Activated naive CD4-positive, alpha-beta T cell treated with anti-CD3 and anti-CD28 coated beads for 36 hours (primary cell): ENCODE measurements at regions of chr5 and their contacts with region 1.

Region 1: DNA sequence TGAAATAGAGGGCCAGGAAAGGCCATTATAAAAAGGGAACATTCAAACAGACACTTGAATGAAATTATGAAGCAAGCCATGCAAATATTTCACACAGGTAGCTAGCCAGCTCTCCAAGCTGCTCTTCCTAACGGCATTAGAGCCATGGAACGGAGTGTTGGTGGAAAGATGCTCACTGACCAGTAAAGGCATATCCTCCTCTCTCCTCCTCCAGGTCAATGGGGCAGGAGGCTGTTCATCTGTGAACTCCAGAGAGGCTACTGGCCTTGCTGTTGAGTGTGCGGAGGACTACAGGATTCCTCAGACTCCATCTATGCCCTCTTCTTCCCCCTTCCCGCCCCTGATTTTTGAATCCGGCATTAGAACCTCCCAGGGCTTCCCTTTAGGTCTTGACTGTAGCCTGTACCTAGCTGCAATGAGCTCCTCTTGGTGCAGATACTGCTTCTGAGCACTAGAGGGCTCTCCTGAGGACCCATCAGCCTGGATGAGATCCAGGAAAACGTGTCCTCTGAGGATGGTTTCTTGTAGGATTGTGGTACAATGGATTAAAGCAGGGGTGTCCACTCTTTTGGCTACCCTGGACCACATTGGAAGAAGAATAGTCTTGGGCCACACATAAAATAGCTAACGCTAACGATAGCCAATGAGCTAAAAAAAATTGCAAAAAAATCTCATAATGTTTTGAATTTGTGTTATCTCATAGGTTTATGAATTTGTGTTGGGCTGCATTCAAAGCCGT is 162.2 kb downstream of the SREK1 start:
- DNase-seq: peak; percentile 52
- H3K4me3 Mint-ChIP-seq: no peak overlapping the region
- H3K27ac Mint-ChIP-seq: no peak overlapping the region
- H3K4me1 Mint-ChIP-seq: no peaks in the 10 kb centered on the region
- H3K27me3 Mint-ChIP-seq: peaks cover 8% of the 10 kb centered on the region

Region 2: GRCh38 chr5:66171349-66172344 is 134.6 kb before region 1 on chr5:
- CTCF ChIA-PET with region 1: interaction called, 3 read pairs
- intact Hi-C with region 1: loop called (anchors 1 kb)
- DNase-seq: peak; percentile 71
- H3K4me3 Mint-ChIP-seq: no peak overlapping the region
- H3K27ac Mint-ChIP-seq: no peak overlapping the region
- H3K4me1 Mint-ChIP-seq: peaks cover 30% of the 10 kb centered on the region
- H3K27me3 Mint-ChIP-seq: no peaks in the 10 kb centered on the region

Region 3: GRCh38 chr5:66367814-66368541 is 61.7 kb after region 1 on chr5:
- CTCF ChIA-PET with region 1: interaction called, 16 read pairs
- intact Hi-C with region 1: no loop called
- DNase-seq: no peak
- H3K4me3 Mint-ChIP-seq: no peak overlapping the region
- H3K27ac Mint-ChIP-seq: no peak overlapping the region
- H3K4me1 Mint-ChIP-seq: no peaks in the 10 kb centered on the region
- H3K27me3 Mint-ChIP-seq: peaks cover 15% of the 10 kb centered on the region

Region 4: DNA sequence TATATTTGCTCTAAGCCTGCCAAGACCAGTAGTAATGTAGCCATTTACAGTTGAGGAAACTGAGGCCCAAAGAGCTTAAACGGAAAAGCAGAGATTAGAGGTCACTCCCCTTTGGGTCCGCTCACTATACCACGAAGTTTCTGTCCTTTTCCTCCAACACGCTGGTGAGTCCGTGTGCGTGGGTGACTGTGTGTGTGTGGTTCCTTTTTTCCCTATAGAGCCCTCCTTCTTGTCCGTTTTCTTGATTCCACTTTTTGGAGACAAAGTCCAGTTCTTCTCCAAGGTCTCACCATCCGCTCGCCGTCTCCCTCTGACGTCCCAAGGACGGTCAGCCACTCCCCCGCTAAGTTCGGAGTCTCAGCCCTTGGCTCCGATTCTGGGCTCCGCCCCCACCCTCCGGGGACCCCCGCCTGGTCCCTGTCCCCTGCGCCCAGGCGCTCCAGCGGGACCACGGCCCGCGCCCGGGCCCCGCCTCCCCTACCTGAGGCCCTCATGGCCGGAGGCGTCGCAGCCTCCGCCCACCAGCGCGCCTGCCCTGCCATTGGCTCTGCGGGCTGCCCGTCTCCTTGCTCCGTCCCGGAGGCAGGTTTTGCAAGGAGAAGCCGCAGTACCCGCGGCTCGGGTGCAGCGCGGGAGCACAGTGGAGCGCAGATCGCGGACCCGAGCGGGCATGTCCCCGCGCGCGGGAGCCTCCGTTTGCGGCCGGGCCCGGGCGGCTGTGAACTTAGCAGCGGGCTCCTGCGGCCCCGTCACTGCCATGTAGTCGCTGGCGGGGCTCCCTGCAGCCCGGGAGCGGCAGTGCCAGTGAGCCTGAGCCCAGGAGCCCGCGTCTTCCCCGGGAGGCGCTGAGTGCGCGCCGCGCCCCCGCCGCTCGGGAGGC is 289.7 kb after region 1 on chr5 and contains the start of gene MAST4:
- CTCF ChIA-PET with region 1: interaction called, 8 read pairs
- intact Hi-C with region 1: loop called (anchors 2 kb)
- DNase-seq: peak; percentile 88
- H3K4me3 Mint-ChIP-seq: peak within 1 kb of the TSS; percentile 76
- H3K27ac Mint-ChIP-seq: no peak within 1 kb of the TSS
- H3K4me1 Mint-ChIP-seq: peaks cover 9% of the 10 kb centered on the region
- H3K27me3 Mint-ChIP-seq: peaks cover 56% of the 10 kb centered on the region
- total RNA-seq, gene MAST4: 27.7 to 28.8 TPM

Region 5: DNA sequence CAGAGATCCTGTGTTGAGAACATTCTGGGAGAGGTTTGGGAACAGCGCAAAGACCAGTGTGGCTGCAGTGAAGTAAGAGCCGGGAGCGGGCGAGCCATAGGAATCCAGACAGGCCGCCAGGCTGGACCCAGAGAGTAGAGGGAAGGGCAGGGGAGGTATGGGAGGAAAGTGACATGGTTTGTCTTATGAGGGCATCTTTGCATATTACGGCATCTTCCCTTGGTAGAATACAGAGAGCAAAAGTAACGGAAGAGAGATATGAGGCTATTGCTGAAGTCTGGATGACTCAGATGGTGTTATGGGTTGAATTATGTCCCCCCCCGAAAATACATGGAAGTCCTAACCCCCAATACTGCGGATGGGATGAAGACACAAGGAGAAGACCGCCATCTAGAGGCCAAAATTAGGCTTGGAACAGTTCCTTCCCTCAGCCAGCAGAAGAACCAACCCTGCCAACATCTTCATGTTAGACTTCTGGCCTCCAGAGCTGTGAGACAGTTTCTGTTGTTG is 558.1 kb after region 1 on chr5:
- CTCF ChIA-PET with region 1: interaction called, 3 read pairs
- intact Hi-C with region 1: loop called (anchors 1 kb)
- DNase-seq: peak; percentile 39
- H3K4me3 Mint-ChIP-seq: no peak overlapping the region
- H3K27ac Mint-ChIP-seq: no peak overlapping the region
- H3K4me1 Mint-ChIP-seq: no peaks in the 10 kb centered on the region
- H3K27me3 Mint-ChIP-seq: peaks cover 30% of the 10 kb centered on the region